ENCODE measurements at regions of chr12 and their contacts with region 1.

Region 1: GRCh38 chr12:74021937-74022336 is 515.7 kb upstream of the ATXN7L3B start:
- DNase-seq: no peak
- H3K4me3 Mint-ChIP-seq: no peak overlapping the region
- H3K27ac Mint-ChIP-seq: no peak overlapping the region
- H3K4me1 Mint-ChIP-seq: no peaks in the 10 kb centered on the region
- H3K27me3 Mint-ChIP-seq: no peaks in the 10 kb centered on the region

Region 2: DNA sequence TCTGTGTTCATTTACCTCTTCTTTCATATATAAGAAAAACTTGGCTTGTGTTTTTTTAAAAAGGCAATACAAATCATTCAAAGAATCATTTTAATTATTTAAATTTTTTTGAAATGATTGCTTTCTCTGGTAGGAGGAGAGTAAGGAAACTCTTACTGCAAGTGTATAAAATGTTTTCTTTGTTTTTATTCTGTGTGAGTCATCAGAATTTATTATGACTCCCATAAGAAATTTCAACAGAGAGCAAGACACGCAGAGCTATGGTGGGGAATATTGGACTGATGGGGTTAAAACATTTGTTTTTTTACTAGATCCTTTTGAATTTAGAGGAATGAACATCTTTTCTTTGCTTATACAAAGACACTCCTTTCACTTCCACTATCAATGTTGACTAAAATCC is 396.6 kb after region 1 on chr12:
- intact Hi-C with region 1: loop called (anchors 2 kb)
- DNase-seq: no peak
- H3K4me3 Mint-ChIP-seq: no peak overlapping the region
- H3K27ac Mint-ChIP-seq: no peak overlapping the region
- H3K4me1 Mint-ChIP-seq: no peaks in the 10 kb centered on the region
- H3K27me3 Mint-ChIP-seq: no peaks in the 10 kb centered on the region

Measured in activated T-helper 1 cell treated with anti-CD3 and anti-CD28 coated beads, Interleukin-12 subunit alpha, Interleukin-12 subunit beta, Interleukin-2, Interleukin-4 antibody, amounts not matched to agents 30 ng/mL and 10 ng/mL and 1 ng/mL, durations not matched to agents 14 hours and 24 hours and 36 hours (primary cell).